Ascending aorta (tissue), 2 donors: ENCODE measurements at regions of chr1 and their contacts with region 1.

Region 1: GRCh38 chr1:109559995-109560394 is 11.6 kb downstream of the GNAI3 start:
- DNase-seq: no peak
- H3K4me3 ChIP-seq: no peak overlapping the region
- H3K27ac ChIP-seq: no peak overlapping the region
- H3K4me1 ChIP-seq: peaks cover 3 to 22% of the 10 kb centered on the region in 2 donors
- H3K27me3 ChIP-seq: no peaks in the 10 kb centered on the region
- CTCF ChIP-seq: no peak

Region 2: DNA sequence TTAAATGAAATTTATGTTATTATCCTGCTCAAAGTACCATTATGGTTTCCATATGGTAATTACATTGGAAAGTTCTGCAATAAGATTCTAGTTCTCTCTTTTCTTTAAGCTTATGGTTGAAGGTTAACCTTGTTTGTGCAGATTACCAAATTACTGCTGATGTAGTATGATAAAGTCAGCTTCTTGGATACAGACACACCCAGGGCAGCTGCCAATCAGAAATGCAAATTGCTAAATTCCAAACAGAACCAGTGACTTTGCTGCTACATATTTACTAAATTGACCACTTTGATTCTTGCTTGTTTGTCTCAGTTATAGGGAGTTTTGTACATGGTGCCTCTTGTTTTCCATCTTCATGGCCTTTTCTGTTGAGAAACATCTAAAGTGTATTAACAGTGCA is 32.9 kb after region 1 on chr1:
- intact Hi-C with region 1: loop called (anchors 1 kb)
- DNase-seq: no peak
- H3K4me3 ChIP-seq: no peak overlapping the region
- H3K27ac ChIP-seq: no peak overlapping the region
- H3K4me1 ChIP-seq: no peaks in the 10 kb centered on the region
- H3K27me3 ChIP-seq: no peaks in the 10 kb centered on the region
- CTCF ChIP-seq: no peak